BJ (cell line): ENCODE measurements at regions of chr18 and their contacts with region 1.

Region 1: DNA sequence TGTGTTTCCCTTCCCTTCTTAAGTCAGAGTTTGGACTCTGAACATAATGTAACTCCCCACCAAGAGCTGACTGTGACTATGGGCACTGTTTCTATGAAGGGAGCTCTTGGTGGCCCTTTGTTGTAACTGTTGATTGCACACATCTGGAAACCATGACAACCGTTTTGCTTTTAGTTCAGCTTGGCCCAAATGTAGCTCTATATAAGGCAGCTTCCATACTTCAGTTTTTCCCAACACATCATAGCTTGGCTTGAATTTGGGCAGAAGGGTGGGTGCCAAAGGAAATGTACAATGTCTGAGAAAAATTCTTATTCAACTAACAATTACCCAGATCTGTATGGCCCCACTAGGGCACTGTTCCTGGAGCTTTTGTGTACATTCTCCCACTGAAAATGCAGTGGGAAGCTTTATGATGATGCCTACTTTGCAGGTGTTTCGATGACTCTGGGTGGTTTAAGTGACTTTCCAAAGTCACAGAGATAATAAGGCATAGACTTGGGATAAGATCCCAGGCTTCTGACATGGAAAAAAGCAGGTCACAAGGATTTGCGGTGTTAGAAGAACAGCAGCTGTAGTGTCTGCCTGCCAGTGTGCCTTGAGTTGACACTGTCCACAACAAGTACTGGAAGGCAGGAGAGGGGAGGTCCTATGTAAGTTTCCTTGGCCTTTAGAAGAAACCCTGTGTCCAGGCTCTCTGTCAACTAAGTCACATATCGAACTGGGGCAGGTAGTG is 2.4 kb upstream of the CETN1 start:
- DNase-seq: no peak
- H3K4me3 ChIP-seq: no peak overlapping the region
- H3K27me3 ChIP-seq: peaks cover 12% of the 10 kb centered on the region
- CTCF ChIP-seq: no peak

Region 2: GRCh38 chr18:703213-703967 is 125.6 kb after region 1 on chr18:
- CTCF ChIA-PET with region 1: no interaction called
- POLR2A ChIA-PET with region 1: interaction called, 10 read pairs
- DNase-seq: peak; percentile 24
- H3K4me3 ChIP-seq: no peak overlapping the region
- H3K27me3 ChIP-seq: no peaks in the 10 kb centered on the region
- CTCF ChIP-seq: no peak

Region 3: GRCh38 chr18:923141-923866 is 345.5 kb after region 1 on chr18:
- CTCF ChIA-PET with region 1: no interaction called
- POLR2A ChIA-PET with region 1: no interaction called
- DNase-seq: no peak
- H3K4me3 ChIP-seq: no peak overlapping the region
- H3K27me3 ChIP-seq: no peaks in the 10 kb centered on the region
- CTCF ChIP-seq: no peak